Common myeloid progenitor, CD34-positive (primary cell): ENCODE measurements at regions of chr5 and their contacts with region 1.

Region 1: GRCh38 chr5:157142317-157143126 is at the start of gene MED7:
- DNase-seq: peak; percentile 99 to 100 (median 100)
- H3K4me3 ChIP-seq: peak within 1 kb of the TSS; percentile 91 to 100 (median 96)
- H3K27ac ChIP-seq: peak within 1 kb of the TSS; percentile 90 to 97
- H3K4me1 ChIP-seq: peaks cover 7 to 17% (median 12%) of the 10 kb centered on the region in 4 experiments
- H3K27me3 ChIP-seq: no peaks in the 10 kb centered on the region

Region 2: DNA sequence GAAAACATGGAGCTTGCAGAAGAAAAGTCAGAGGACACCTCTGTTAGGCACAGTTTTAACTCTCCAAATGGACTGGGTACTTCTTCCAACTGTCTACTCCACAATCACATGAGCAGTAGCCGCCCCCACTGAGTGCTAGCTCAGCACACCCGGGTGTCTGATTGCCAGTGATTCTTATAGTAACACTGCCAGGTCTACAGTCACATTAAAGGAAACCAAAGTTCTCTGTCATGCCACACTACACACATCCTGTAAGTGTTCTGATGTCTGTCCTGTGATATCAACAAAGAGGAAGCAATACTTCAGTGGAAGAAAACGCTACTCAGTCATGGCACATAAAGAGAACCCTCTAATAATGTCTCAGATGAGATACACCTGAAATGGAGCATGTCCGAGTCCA is 33.5 kb before region 1 on chr5 and contains the start of gene HAVCR2:
- CTCF ChIA-PET with region 1: interaction called, 10 read pairs
- POLR2A ChIA-PET with region 1: no interaction called
- DNase-seq: peak; percentile 39 to 94 (median 88)
- H3K4me3 ChIP-seq: peak within 1 kb of the TSS in 6 of 7 experiments; percentile 1 to 63 (median 36)
- H3K27ac ChIP-seq: peak within 1 kb of the TSS in 1 of 2 experiments; percentile 60
- H3K4me1 ChIP-seq: peaks cover 14 to 44% (median 32%) of the 10 kb centered on the region in 4 experiments
- H3K27me3 ChIP-seq: no peaks in the 10 kb centered on the region

Region 3: GRCh38 chr5:157233515-157233914 is 91.0 kb after region 1 on chr5:
- CTCF ChIA-PET with region 1: no interaction called
- POLR2A ChIA-PET with region 1: no interaction called
- DNase-seq: no peak
- H3K4me3 ChIP-seq: no peak overlapping the region
- H3K27ac ChIP-seq: no peak overlapping the region
- H3K4me1 ChIP-seq: no peaks in the 10 kb centered on the region
- H3K27me3 ChIP-seq: no peaks in the 10 kb centered on the region

Region 4: GRCh38 chr5:157342822-157343402 is 200.4 kb after region 1 on chr5:
- CTCF ChIA-PET with region 1: no interaction called
- POLR2A ChIA-PET with region 1: no interaction called
- DNase-seq: peak in 2 of 3 donors; percentile 20 to 23
- H3K4me3 ChIP-seq: no peak overlapping the region
- H3K27ac ChIP-seq: no peak overlapping the region
- H3K4me1 ChIP-seq: no peaks in the 10 kb centered on the region
- H3K27me3 ChIP-seq: no peaks in the 10 kb centered on the region

Region 5: GRCh38 chr5:157971571-157972216 is 829.2 kb after region 1 on chr5:
- CTCF ChIA-PET with region 1: no interaction called
- POLR2A ChIA-PET with region 1: no interaction called
- DNase-seq: no peak
- H3K4me3 ChIP-seq: no peak overlapping the region
- H3K27ac ChIP-seq: no peak overlapping the region
- H3K4me1 ChIP-seq: no peaks in the 10 kb centered on the region
- H3K27me3 ChIP-seq: no peaks in the 10 kb centered on the region